ENCODE measurements at regions of chr4 and their contacts with region 1.

Region 1: DNA sequence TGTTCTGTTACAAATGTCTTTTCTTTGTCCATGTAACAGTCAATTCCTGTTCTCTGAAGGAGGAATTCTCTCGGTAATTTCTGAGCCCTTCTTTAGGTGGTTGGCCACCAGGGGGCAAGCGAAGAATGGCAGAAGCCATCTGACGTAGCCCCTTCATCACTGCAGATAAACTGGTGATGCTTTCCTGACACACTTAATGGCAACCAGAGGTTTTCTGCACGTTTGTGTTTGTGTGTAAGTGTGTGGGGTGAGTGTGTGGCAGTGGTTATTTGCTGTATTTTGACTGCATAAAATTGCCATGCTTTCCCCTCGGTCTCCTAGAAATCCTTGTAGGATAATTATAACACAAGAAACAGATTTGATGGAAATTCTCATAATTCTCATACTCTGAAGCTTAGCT is 64.8 kb upstream of the STOX2 start:
- H3K4me3 ChIP-seq: no peak overlapping the region
- H3K27ac ChIP-seq: no peak overlapping the region
- H3K4me1 ChIP-seq: no peaks in the 10 kb centered on the region
- CTCF ChIP-seq: peak; percentile 58; the same call in 1 of the 2 replicates

Region 2: GRCh38 chr4:184100297-184100885 is 260.1 kb after region 1 on chr4:
- CTCF ChIA-PET with region 1: interaction called, 34 read pairs
- POLR2A ChIA-PET with region 1: no interaction called
- H3K4me3 ChIP-seq: no peak overlapping the region
- H3K27ac ChIP-seq: no peak overlapping the region
- H3K4me1 ChIP-seq: no peaks in the 10 kb centered on the region
- CTCF ChIP-seq: peak; percentile 80